Activated T-helper 1 cell treated with anti-CD3 and anti-CD28 coated beads, Interleukin-12 subunit alpha, Interleukin-12 subunit beta, Interleukin-2, Interleukin-4 antibody, amounts not matched to agents 30 ng/mL and 10 ng/mL and 1 ng/mL, durations not matched to agents 14 hours and 24 hours and 36 hours (primary cell): ENCODE measurements at regions of chr4 and their contacts with region 1.

Region 1: GRCh38 chr4:67545199-67546003 is at the start of gene CENPC:
- DNase-seq: peak; percentile 90
- H3K4me3 Mint-ChIP-seq: peak within 1 kb of the TSS; percentile 100
- H3K27ac Mint-ChIP-seq: peak within 1 kb of the TSS; percentile 98
- H3K4me1 Mint-ChIP-seq: peaks cover 47% of the 10 kb centered on the region
- H3K27me3 Mint-ChIP-seq: no peaks in the 10 kb centered on the region
- total RNA-seq, gene CENPC: 27.7 and 29.2 TPM in 2 replicates

Region 2: GRCh38 chr4:67512501-67512900 is 32.9 kb before region 1 on chr4:
- intact Hi-C with region 1: no loop called
- DNase-seq: no peak
- H3K4me3 Mint-ChIP-seq: no peak overlapping the region
- H3K27ac Mint-ChIP-seq: no peak overlapping the region
- H3K4me1 Mint-ChIP-seq: peaks cover 26% of the 10 kb centered on the region
- H3K27me3 Mint-ChIP-seq: no peaks in the 10 kb centered on the region

Region 3: GRCh38 chr4:67535280-67535840 is 10.0 kb before region 1 on chr4:
- intact Hi-C with region 1: loop called (anchors 1 kb)
- DNase-seq: no peak
- H3K4me3 Mint-ChIP-seq: no peak overlapping the region
- H3K27ac Mint-ChIP-seq: no peak overlapping the region
- H3K4me1 Mint-ChIP-seq: peaks cover 13% of the 10 kb centered on the region
- H3K27me3 Mint-ChIP-seq: no peaks in the 10 kb centered on the region

Region 4: GRCh38 chr4:67581208-67581857 is 35.9 kb after region 1 on chr4:
- intact Hi-C with region 1: loop called (anchors 1 kb)
- DNase-seq: peak; percentile 27
- H3K4me3 Mint-ChIP-seq: peak overlapping the region; percentile 63
- H3K27ac Mint-ChIP-seq: peak overlapping the region; percentile 91
- H3K4me1 Mint-ChIP-seq: peaks cover 26% of the 10 kb centered on the region
- H3K27me3 Mint-ChIP-seq: no peaks in the 10 kb centered on the region

Region 5: DNA sequence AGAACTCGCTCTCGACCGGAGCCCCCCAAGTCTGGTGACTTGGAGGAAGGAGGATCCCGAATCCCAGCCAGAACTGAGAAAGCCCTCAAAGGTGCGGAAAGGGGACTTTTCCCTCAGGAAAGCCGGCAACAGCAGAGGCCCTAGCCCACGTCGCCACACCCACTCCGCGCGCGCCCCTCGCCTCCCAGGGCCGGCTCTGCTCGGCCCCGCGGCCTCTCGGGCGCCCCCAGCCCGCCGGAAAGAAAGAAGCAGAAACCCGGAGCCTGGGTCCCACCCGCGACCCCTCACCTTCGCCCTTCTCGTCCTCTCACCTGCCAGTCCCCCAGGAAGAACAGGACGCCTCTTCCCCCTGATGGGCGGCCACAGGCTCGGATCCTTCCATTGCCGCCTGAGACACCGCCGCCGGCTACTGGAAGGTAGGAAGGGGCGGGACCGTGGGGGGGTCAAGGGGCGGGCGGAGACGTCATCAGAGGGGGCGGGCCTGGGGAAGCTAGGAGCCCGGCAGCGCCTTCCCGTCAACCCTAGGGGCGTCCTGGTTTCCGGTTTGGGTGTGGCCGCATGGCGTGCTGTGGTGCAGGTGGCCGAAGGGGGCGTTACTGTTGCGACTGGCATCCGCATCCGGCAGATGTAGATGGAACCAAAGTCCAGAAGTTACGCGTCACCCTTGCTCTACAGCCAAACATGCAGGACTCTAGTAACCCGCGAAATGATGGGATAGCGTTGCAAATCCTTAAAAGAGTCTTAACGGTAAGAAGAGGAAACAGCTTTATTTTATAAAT is 155.5 kb after region 1 on chr4 and contains the start of gene UBA6:
- intact Hi-C with region 1: loop called (anchors 1 kb)
- DNase-seq: peak; percentile 94
- H3K4me3 Mint-ChIP-seq: peak within 1 kb of the TSS; percentile 99
- H3K27ac Mint-ChIP-seq: peak within 1 kb of the TSS; percentile 96
- H3K4me1 Mint-ChIP-seq: peaks cover 68% of the 10 kb centered on the region
- H3K27me3 Mint-ChIP-seq: no peaks in the 10 kb centered on the region
- total RNA-seq, gene UBA6: 78.2 and 78.5 TPM in 2 replicates

Region 6: GRCh38 chr4:68175562-68176155 is 630.3 kb after region 1 on chr4:
- intact Hi-C with region 1: loop called (anchors 1 kb)
- DNase-seq: no peak
- H3K4me3 Mint-ChIP-seq: no peak overlapping the region
- H3K27ac Mint-ChIP-seq: no peak overlapping the region
- H3K4me1 Mint-ChIP-seq: no peaks in the 10 kb centered on the region
- H3K27me3 Mint-ChIP-seq: peaks cover 6% of the 10 kb centered on the region